A549 (cell line): ENCODE measurements at regions of chr1 and their contacts with region 1.

Region 1: DNA sequence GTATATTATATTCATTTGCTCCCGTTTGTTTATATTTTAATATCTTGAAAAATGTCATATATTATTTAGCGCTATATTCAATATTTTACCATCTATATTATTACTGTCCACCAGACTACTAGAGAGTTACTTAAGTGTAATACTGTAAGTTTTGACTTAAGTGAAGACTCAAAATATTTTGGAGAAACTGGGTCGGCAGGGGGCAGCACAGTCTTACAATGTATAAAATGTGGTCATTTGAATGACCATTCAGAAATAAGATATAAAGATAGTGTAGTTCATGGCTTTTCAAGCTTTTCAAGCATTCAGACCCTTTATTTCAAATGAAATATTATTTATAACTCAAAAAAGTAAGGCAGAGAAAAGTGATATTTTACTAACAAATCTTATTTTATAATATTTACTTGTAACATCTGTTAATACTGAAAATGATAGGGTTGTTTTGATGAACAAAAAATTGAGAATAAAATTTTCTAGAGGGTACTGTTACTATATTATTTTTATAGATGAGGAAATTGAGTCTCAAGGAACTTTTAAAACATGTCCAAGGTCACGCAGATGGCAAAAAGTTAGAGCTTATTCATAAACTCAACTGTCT is 89.0 kb upstream of the SERTAD4 start:
- DNase-seq: peak; percentile 57 to 75
- ATAC-seq: peak; percentile 47 to 71; a peak in 4 of 6 replicates
- H3K4me3 ChIP-seq: no peak overlapping the region
- H3K27ac ChIP-seq: no peak overlapping the region
- H3K4me1 ChIP-seq: 0 out of 3 replicates have a peak, but pooled peaks cover 3% of the 10 kb centered on the region
- CTCF ChIP-seq: peak; percentile 84
- EP300 ChIP-seq: no peak
- POLR2A ChIP-seq: no peak
- RAD21 ChIP-seq: peak; percentile 88 to 91

Region 2: GRCh38 chr1:210185063-210185462 is 41.5 kb after region 1 on chr1:
- CTCF ChIA-PET with region 1: no interaction called
- POLR2A ChIA-PET with region 1: no interaction called
- DNase-seq: no peak
- ATAC-seq: no peak
- H3K4me3 ChIP-seq: no peak overlapping the region
- H3K27ac ChIP-seq: no peak overlapping the region
- H3K4me1 ChIP-seq: peaks cover 14% of the 10 kb centered on the region; the same call in 2 of the 3 replicates
- CTCF ChIP-seq: no peak
- EP300 ChIP-seq: no peak
- POLR2A ChIP-seq: no peak
- RAD21 ChIP-seq: no peak; a peak in 1 of 5 replicates

Region 3: GRCh38 chr1:210292231-210292871 is 148.8 kb after region 1 on chr1:
- CTCF ChIA-PET with region 1: interaction called, 12 read pairs
- POLR2A ChIA-PET with region 1: no interaction called
- DNase-seq: peak; percentile 49 to 59
- ATAC-seq: peak; percentile 92 to 94
- H3K4me3 ChIP-seq: peak overlapping the region; percentile 44
- H3K27ac ChIP-seq: peak overlapping the region; percentile 58 to 85
- H3K4me1 ChIP-seq: 0 out of 3 replicates have a peak, but pooled peaks cover 3% of the 10 kb centered on the region
- CTCF ChIP-seq: peak; percentile 49
- EP300 ChIP-seq: no peak
- POLR2A ChIP-seq: no peak
- RAD21 ChIP-seq: no peak

Region 4: GRCh38 chr1:210328746-210329503 is 185.4 kb after region 1 on chr1 and contains the start of gene HHAT:
- CTCF ChIA-PET with region 1: interaction called, 11 read pairs
- POLR2A ChIA-PET with region 1: no interaction called
- DNase-seq: peak; percentile 75 to 81
- ATAC-seq: peak; percentile 93 to 96
- H3K4me3 ChIP-seq: peak within 1 kb of the TSS; percentile 60
- H3K27ac ChIP-seq: peak within 1 kb of the TSS; percentile 87 to 94
- H3K4me1 ChIP-seq: peaks cover 17% of the 10 kb centered on the region; the same call in 2 of the 3 replicates
- CTCF ChIP-seq: no peak
- EP300 ChIP-seq: no peak
- POLR2A ChIP-seq: peak; percentile 49
- RAD21 ChIP-seq: no peak
- polyA plus RNA-seq, gene HHAT: 4.5 and 5.0 TPM in 2 replicates